ENCODE measurements at regions of chr18 and their contacts with region 1.

Region 1: GRCh38 chr18:59899298-59900221 is at the start of gene PMAIP1:
- DNase-seq: peak; percentile 84
- H3K4me3 Mint-ChIP-seq: peak within 1 kb of the TSS; percentile 96
- H3K27ac Mint-ChIP-seq: peak within 1 kb of the TSS; percentile 96
- H3K4me1 Mint-ChIP-seq: peaks cover 40% of the 10 kb centered on the region
- H3K27me3 Mint-ChIP-seq: no peaks in the 10 kb centered on the region
- total RNA-seq, gene PMAIP1: 41.8 and 42.0 TPM in 2 replicates

Region 2: DNA sequence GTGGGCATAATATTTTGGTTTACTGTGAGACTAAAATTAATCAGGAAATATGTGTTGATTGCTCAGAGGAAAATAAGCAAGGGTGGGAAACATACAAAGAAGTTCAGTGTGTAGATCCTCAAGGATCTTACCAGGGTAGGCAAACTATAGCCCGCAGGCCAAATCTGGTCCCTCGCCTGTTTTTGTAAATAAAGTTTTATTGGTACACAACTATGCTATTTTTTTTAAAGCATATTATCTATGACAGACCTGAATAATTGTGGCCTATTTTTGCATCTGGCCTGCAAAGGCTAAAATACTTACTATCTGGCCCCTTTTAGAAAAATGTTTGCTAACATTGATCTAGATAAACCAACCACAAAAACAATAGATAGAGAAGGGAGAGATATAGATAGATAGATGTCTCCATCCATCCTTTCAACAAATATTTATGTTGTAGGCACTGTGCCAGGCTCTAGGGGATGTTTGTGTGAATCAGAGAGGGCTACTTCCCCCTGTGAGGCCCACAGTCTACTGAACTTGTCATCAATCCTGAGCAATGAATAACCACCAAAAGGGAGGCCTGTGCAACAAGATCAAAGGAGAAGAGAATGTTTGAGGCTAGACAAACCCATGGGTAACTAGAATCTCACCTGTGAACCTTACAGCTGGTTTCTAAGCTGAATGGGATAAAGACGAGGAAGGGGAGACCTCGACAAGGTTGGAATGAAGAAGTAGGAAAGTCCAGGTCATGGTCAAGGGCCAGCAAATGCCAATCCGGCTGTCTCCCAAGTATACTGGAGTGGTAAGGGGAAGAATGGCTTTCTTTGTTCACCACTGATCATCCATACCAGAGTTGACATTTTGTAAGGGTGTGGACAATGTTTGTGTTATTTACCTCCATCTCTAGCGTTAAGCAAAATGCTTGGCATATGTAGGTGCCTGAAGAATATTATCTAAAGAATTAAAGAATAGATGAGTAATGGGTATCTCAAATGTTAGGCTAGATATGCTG is 1294.2 kb before region 1 on chr18:
- intact Hi-C with region 1: loop called (anchors 10 kb)
- DNase-seq: no peak
- H3K4me3 Mint-ChIP-seq: no peak overlapping the region
- H3K27ac Mint-ChIP-seq: no peak overlapping the region
- H3K4me1 Mint-ChIP-seq: peaks cover 33% of the 10 kb centered on the region
- H3K27me3 Mint-ChIP-seq: peaks cover 3% of the 10 kb centered on the region

Region 3: DNA sequence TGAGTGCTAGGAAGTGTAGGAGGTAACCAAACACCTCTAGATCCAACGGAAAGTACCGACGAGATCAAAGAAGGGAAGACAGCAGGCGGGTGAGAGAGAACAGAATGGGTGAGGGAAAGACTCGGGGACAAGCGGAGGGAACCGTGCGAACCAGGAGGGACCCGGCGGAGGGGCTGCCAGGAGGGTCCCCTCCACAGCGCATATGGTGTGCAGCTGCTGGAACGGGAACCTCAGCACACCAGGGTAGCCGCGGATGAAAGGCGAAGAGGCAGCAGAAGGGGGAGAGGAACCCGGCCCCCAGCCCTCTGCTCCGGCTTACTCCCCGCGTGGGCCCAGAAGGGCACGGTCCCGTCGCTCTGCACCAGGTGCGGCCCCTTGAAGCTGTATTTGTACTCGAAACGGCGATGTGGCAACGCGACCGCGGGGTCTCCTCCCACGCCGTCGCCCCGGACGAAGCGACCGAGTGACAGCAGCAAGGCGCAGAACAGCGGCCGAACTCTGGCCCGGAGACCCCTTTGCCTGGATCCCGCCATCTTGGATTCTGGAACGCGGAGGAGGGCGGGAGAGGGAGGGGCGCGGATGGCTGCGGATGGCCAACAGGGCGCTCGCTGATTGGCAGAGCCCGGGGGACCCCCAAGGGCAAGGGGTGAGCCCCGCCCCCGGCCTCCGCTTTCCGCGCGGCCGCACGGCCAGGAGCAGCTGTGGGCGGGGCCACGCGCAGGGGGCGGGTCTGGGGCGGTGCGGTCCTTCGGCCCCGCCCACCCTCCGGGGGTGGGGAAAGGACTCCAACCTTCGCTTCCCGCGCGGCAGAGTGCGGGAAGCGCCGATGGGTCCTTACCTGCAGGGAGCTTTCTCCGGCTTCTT is 540.6 kb before region 1 on chr18 and contains the start of gene LMAN1:
- intact Hi-C with region 1: loop called (anchors 2 kb)
- DNase-seq: peak; percentile 89
- H3K4me3 Mint-ChIP-seq: peak within 1 kb of the TSS; percentile 100
- H3K27ac Mint-ChIP-seq: peak within 1 kb of the TSS; percentile 100
- H3K4me1 Mint-ChIP-seq: peaks cover 29% of the 10 kb centered on the region
- H3K27me3 Mint-ChIP-seq: peaks cover 9% of the 10 kb centered on the region
- total RNA-seq, gene LMAN1: 141 and 146 TPM in 2 replicates

Region 4: DNA sequence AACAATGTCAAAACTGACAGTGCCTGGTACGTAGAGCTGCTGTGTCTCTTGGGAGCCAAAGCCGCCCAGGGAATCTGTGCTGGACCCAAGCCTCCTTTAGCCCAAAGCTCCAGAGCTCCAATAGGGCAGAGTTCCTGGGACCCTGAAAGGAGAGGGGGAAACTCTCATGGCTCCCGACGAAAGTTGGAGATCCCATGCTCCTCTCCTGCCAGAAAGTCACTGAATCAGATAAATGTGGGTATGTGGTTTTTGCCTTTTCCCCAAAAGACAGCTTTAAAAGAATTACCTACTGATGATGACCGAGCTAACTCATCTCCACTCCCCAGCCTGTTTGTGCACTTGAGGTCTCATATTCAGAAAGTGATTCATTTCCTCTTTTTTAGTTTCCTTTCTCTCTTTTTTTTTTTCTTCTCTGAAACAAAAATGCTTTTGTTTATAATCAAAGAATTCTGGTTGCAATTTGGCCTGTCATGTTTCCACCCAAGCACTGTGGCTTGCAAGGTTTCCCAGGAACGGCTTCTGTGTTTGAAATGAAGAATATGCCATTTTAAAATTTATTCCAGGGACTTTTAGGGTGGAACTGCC is 13.9 kb before region 1 on chr18:
- intact Hi-C with region 1: loop called (anchors 1 kb)
- DNase-seq: peak; percentile 33
- H3K4me3 Mint-ChIP-seq: peak overlapping the region; percentile 21
- H3K27ac Mint-ChIP-seq: peak overlapping the region; percentile 11
- H3K4me1 Mint-ChIP-seq: peaks cover 44% of the 10 kb centered on the region
- H3K27me3 Mint-ChIP-seq: no peaks in the 10 kb centered on the region

Region 5: DNA sequence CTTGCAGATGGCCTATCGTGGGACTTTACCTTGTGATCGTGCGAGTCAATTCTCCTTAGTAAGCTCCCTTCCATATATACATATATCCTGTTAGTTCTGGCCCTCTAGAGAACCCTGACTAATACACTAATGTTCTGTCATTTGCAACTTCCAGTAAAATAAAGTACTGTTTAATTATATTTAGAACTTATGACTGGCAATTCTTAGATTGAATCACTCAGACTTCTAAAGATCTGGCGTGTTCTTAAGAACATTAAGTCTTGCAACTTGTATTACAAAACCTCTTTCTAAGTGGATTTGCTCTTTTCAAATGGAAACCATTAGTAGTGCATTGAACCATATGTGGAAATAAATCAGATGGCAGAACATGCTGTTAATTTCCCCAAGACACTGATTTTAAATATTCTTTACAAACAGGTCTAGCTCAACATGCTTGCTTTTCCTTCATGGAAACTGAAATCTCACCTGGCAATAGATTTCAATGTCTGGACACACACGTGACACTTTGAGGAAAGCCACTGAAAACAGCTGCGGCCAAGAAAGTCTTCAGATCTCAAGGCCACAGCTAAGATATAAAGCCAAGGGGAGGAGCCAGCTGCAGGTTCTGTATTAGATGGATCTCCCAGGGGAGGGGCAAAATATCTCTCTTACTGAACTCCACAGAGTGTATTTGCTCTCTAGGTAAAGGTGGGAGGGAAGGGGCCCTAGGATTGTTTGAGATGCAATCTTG is 50.8 kb after region 1 on chr18:
- intact Hi-C with region 1: loop called (anchors 1 kb)
- DNase-seq: no peak
- H3K4me3 Mint-ChIP-seq: no peak overlapping the region
- H3K27ac Mint-ChIP-seq: peak overlapping the region; percentile 47
- H3K4me1 Mint-ChIP-seq: peaks cover 37% of the 10 kb centered on the region
- H3K27me3 Mint-ChIP-seq: peaks cover 5% of the 10 kb centered on the region